AG04449 (cell line): ENCODE measurements at regions of chr6 and their contacts with region 1.

Region 1: DNA sequence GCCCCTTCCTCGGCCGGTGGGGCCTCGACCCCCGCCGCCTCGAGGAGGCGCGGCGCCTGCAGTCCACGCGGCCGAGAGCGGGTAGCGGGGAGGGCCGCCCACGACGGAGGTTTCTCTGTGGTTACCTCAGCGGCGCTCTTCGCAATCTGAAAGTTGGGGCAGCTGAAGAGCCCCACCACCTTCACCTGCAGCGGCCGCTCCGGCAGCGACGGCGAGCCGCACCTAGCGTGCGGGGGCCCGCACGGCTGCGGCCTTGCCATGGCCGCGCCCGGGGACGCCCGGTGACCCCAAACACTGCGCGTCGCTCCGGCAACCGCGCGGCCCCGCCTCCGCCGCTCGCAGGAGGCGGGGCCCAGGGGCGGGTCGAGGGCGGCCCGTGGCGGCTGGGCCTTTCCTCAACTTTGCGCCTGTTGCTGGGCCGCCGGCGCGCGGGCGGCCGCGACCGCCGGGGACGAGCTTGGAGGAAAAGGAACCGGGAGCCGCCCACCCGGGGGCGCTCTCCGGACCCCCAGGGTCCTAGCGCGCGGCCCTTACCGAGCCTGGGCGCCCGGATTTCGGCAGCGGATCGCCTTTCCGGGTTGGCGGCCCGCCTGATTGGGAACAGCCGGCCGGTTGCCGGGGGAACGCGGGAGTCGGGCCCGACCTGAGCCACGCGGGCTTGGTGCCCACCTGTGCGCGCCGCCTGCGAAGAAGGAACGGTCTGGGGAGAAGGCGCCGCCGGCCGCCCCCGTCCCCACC is at the starts of genes PPIL6 and SMPD2:
- DNase-seq: no peak
- H3K4me3 ChIP-seq: peak within 1 kb of the TSS; percentile 78
- CTCF ChIP-seq: peak; percentile 54

Region 2: GRCh38 chr6:109455502-109456282 is 15.2 kb after region 1 on chr6 and contains the start of gene MICAL1:
- CTCF ChIA-PET with region 1: interaction called, 65 read pairs
- POLR2A ChIA-PET with region 1: interaction called, 12 read pairs
- DNase-seq: no peak
- H3K4me3 ChIP-seq: peak within 1 kb of the TSS; percentile 92
- CTCF ChIP-seq: peak; percentile 50